Posterior cingulate gyrus (tissue), 11 donors: ENCODE measurements at regions of chr9 and their contacts with region 1.

Region 1: GRCh38 chr9:15552636-15553527 is at the start of gene CCDC171:
- DNase-seq: peak; percentile 81 to 99 (median 90)

Region 2: GRCh38 chr9:15444142-15444541 is 108.7 kb before region 1 on chr9:
- intact Hi-C with region 1: no loop called
- DNase-seq: no peak

Region 3: GRCh38 chr9:15510789-15511575 is 41.9 kb before region 1 on chr9 and contains the start of gene PSIP1:
- intact Hi-C with region 1: loop called (anchors 1 kb)
- DNase-seq: peak; percentile 64 to 96 (median 76)